A549 (cell line): ENCODE measurements at regions of chr16 and their contacts with region 1.

Region 1: GRCh38 chr16:22077700-22078313 is 14.5 kb upstream of the VWA3A start:
- DNase-seq: peak; percentile 50 to 61
- ATAC-seq: peak; percentile 86 to 90
- H3K4me3 ChIP-seq: no peak overlapping the region
- H3K27ac ChIP-seq: no peak overlapping the region
- H3K4me1 ChIP-seq: no peaks in the 10 kb centered on the region
- CTCF ChIP-seq: peak; percentile 95
- EP300 ChIP-seq: no peak
- POLR2A ChIP-seq: no peak
- RAD21 ChIP-seq: peak; percentile 85 to 90

Region 2: DNA sequence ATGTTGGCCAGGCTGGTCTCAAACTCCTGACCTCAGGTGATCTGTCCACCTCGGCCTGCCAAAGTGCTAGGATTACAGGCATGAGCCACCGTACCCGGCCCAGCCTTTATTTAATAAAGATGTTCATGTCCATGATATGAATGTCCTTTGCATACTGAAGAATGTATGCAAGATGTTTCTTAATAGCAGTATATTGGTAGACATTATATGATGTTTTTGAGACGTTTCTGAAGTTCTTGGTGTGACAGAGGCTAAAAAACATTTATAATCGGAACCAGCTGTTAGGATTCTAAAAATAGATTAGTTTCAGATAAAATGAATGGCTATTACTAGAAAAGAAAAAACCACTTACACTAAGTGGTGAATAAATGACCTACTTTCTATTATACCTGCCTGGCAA is 88.7 kb before region 1 on chr16:
- CTCF ChIA-PET with region 1: interaction called, 43 read pairs
- POLR2A ChIA-PET with region 1: no interaction called
- DNase-seq: no peak
- ATAC-seq: no peak
- H3K4me3 ChIP-seq: no peak overlapping the region
- H3K27ac ChIP-seq: no peak overlapping the region
- H3K4me1 ChIP-seq: no peaks in the 10 kb centered on the region
- CTCF ChIP-seq: no peak
- EP300 ChIP-seq: no peak
- POLR2A ChIP-seq: no peak
- RAD21 ChIP-seq: no peak

Region 3: DNA sequence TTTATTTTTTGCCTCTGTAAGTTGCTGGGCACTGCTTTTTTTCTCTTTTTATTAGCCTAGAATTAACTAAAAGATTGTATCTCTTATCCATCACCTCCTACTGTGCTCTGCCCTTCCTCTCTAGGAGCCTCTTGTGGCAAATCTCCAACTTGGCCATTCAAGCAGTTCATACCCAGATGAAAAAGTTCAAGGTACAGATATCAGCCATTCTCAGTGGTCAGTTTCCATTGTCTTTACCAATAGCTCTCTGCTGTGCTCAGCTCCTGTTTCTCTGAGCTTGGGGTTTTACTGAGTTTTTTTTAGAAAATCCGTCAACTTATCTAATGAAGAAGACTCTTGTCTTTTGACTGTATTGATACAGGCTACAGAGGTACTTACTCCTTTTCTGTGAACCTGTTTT is 54.3 kb before region 1 on chr16:
- CTCF ChIA-PET with region 1: interaction called, 10 read pairs
- POLR2A ChIA-PET with region 1: no interaction called
- DNase-seq: no peak
- ATAC-seq: no peak
- H3K4me3 ChIP-seq: no peak overlapping the region
- H3K27ac ChIP-seq: no peak overlapping the region
- H3K4me1 ChIP-seq: peaks cover 40% of the 10 kb centered on the region
- CTCF ChIP-seq: no peak
- EP300 ChIP-seq: no peak
- POLR2A ChIP-seq: no peak
- RAD21 ChIP-seq: no peak

Region 4: DNA sequence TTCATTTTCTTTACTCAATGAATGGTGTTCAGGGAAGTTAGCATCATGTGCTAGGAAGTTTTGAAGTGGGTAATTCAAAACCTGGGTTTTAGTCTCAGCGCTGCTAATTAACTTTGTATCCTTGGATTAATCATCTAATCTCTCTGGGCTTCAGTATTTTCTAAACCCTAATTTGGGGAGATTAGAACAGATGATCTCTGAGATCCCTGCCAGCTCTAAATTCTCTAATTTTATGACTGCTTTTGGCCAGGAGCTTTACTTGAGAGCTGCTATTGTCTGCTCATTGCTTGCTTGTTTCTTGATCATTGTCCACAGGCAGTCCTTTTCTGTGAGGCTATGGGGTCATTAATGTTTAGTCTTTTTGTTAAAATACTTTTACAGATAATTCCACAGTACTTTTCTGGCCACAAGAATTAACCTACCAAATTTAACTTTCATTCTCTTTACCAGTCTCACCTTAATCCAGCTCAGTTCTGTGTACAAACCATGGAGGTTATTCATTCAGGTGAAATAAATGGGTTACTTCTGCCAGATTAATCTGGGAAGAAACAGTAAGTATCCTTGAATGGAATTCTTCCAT is 13.8 kb before region 1 on chr16:
- CTCF ChIA-PET with region 1: interaction called, 42 read pairs
- POLR2A ChIA-PET with region 1: interaction called, 7 read pairs
- DNase-seq: no peak
- ATAC-seq: no peak
- H3K4me3 ChIP-seq: no peak overlapping the region
- H3K27ac ChIP-seq: no peak overlapping the region
- H3K4me1 ChIP-seq: no peaks in the 10 kb centered on the region
- CTCF ChIP-seq: no peak
- EP300 ChIP-seq: no peak
- POLR2A ChIP-seq: no peak
- RAD21 ChIP-seq: no peak

Region 5: GRCh38 chr16:22116095-22116700 is 38.4 kb after region 1 on chr16:
- CTCF ChIA-PET with region 1: interaction called, 14 read pairs
- POLR2A ChIA-PET with region 1: no interaction called
- DNase-seq: no peak
- ATAC-seq: 0 out of 6 replicates have a peak, but pooled peaks of 1 of the 2 experiments have one; percentile 19
- H3K4me3 ChIP-seq: no peak overlapping the region
- H3K27ac ChIP-seq: no peak overlapping the region
- H3K4me1 ChIP-seq: no peaks in the 10 kb centered on the region
- CTCF ChIP-seq: no peak
- EP300 ChIP-seq: no peak
- POLR2A ChIP-seq: no peak
- RAD21 ChIP-seq: no peak